ENCODE measurements at regions of chr7 and their contacts with region 1.

Region 1: GRCh38 chr7:12067141-12067831 is 143.8 kb upstream of the TMEM106B start:
- DNase-seq: peak in 1 of 2 experiments; percentile 72
- H3K4me3 ChIP-seq: no peak overlapping the region
- H3K27ac ChIP-seq: peak overlapping the region; percentile 99
- H3K4me1 ChIP-seq: peaks cover 23% of the 10 kb centered on the region
- H3K27me3 ChIP-seq: no peaks in the 10 kb centered on the region
- CTCF ChIP-seq: peak; percentile 61

Region 2: DNA sequence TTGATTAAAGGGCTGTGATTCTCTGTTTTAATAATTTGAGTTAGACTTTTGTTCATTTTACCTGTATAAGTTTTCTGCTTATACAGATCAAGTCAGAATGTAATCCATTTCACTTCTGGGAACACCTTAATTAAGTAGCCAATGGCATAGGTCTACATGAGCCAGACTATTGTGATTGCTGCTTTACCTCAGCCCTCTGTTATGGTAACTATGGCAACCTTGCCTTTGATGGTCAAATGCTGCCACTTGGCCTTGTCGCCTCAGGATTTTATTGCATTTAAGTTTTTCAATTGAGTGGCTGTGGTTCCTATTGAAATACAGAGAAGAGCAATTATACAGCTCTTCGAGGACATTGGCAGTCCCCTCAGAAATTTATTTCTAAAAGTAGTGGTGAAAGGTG is 79.5 kb after region 1 on chr7:
- CTCF ChIA-PET with region 1: no interaction called
- POLR2A ChIA-PET with region 1: no interaction called
- intact Hi-C with region 1: no loop called
- DNase-seq: no peak
- H3K4me3 ChIP-seq: no peak overlapping the region
- H3K27ac ChIP-seq: no peak overlapping the region
- H3K4me1 ChIP-seq: no peaks in the 10 kb centered on the region
- H3K27me3 ChIP-seq: no peaks in the 10 kb centered on the region
- CTCF ChIP-seq: no peak

Region 3: DNA sequence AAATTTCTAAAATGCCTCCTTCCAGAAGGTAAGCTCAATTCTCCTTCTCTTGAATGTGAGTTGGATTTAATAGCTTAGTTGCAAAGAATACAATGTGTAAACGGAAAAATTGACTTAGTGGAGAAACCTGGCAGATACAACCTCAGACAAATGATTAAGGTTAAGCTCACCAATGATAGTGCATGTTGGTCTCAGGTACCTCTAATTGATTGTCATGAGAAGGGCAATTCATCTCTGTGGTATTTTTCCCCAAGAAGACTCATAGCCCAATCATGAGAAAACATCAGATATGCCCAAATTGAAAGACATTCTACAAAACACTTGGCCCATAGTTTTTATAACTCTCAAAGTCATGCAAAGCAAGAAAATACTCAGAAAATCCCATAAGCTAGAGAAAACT is 107.6 kb after region 1 on chr7:
- CTCF ChIA-PET with region 1: no interaction called
- POLR2A ChIA-PET with region 1: no interaction called
- intact Hi-C with region 1: no loop called
- DNase-seq: no peak
- H3K4me3 ChIP-seq: no peak overlapping the region
- H3K27ac ChIP-seq: no peak overlapping the region
- H3K4me1 ChIP-seq: peaks cover 8% of the 10 kb centered on the region
- H3K27me3 ChIP-seq: no peaks in the 10 kb centered on the region
- CTCF ChIP-seq: no peak

Region 4: DNA sequence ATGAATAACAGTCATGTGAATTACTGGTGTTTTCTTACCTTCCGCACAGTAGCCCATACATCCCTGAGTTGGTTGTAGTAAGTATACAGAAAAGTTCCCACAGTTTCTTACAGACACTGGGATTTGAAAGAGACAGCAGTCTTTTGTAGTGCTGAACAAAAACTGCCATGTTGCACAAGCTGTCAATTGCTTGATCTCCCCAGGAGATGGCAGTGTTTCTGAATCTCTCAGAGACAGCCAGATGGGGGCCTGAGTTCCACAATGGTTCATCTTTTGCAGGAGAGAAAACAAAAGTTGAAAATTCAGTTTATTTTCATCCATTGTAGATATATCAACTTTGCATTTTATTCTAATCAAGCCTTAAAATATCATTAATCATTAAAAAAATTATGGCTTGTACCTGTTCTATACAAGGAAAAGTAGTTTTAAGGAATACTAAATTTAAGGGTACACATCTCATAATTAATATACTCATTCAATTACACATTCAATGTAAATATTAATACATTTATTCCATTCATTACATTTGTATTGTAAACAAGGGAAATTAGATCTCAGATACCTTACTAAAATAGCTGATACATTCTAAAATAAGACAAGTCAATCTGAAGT is 321.9 kb after region 1 on chr7:
- CTCF ChIA-PET with region 1: no interaction called
- POLR2A ChIA-PET with region 1: no interaction called
- intact Hi-C with region 1: loop called (anchors 5 kb)
- DNase-seq: peak; percentile 50 to 52
- H3K4me3 ChIP-seq: no peak overlapping the region
- H3K27ac ChIP-seq: no peak overlapping the region
- H3K4me1 ChIP-seq: no peaks in the 10 kb centered on the region
- H3K27me3 ChIP-seq: no peaks in the 10 kb centered on the region
- CTCF ChIP-seq: peak; percentile 90

Region 5: GRCh38 chr7:14000247-14000646 is 1933.0 kb after region 1 on chr7:
- CTCF ChIA-PET with region 1: no interaction called
- POLR2A ChIA-PET with region 1: no interaction called
- intact Hi-C with region 1: no loop called
- DNase-seq: peak in 1 of 2 experiments; percentile 44
- H3K4me3 ChIP-seq: no peak overlapping the region
- H3K27ac ChIP-seq: no peak overlapping the region
- H3K4me1 ChIP-seq: no peaks in the 10 kb centered on the region
- H3K27me3 ChIP-seq: no peaks in the 10 kb centered on the region
- CTCF ChIP-seq: no peak